Activated CD4-positive, alpha-beta T cell treated with anti-CD3 and anti-CD28 coated beads, Interleukin-2, amount 10 ng/mL, durations not matched to agents 24 days and 14 days (primary cell): ENCODE measurements at regions of chr13 and their contacts with region 1.

Region 1: DNA sequence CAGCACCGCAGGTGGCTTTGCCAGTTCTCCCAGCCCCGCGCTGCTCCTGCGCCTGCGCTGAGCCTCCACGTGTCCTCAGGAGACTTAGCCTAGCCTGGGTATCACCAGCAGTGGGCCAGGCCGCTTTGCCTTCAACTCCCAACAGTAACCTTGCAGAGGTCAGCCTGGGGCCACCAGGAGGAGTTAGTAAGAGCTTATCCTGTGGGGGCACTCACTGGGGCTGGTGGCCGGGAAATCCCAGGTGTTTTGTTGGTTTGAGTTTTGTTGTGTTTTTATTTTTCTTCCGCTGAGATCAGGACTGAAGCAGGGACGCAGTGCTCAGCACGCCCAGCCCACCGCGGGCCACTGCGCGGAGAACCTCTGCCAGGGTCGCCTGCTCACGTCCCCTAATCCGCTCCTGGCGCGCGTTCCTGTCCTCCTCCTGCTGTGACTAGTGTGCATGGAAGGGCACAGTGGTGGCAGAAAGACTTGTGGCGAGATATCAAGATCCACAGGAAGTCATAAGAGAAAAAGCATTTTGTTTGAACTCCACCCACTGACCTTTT is 207.4 kb upstream of the RFC3 start:
- DNase-seq: peak; percentile 79
- H3K4me3 Mint-ChIP-seq: peak overlapping the region; percentile 89
- H3K27ac Mint-ChIP-seq: peak overlapping the region; percentile 87
- H3K4me1 Mint-ChIP-seq: peaks cover 38% of the 10 kb centered on the region
- H3K27me3 Mint-ChIP-seq: no peaks in the 10 kb centered on the region

Region 2: DNA sequence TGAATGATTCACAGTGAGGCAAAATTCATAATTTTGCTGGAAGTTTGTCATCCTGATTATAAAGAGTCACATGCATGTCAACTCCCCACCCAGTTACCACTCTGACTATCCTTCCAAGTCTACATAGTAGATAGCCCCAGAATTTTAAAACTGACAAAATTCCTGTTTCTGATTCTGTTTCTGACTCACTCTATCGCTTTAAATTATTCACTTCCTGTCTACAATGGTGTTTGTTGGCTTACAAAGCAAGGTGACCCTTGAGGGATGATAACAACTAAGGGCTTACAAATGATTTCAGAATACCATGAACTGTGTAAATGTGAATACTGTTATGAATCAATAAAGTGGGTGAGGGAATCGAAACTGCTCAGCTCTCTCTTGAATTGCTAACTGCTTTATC is 693.0 kb before region 1 on chr13:
- intact Hi-C with region 1: loop called (anchors 5 kb)
- DNase-seq: no peak
- H3K4me3 Mint-ChIP-seq: no peak overlapping the region
- H3K27ac Mint-ChIP-seq: peak overlapping the region; percentile 57
- H3K4me1 Mint-ChIP-seq: peaks cover 10% of the 10 kb centered on the region
- H3K27me3 Mint-ChIP-seq: no peaks in the 10 kb centered on the region

Region 3: GRCh38 chr13:33146843-33147611 is 463.5 kb before region 1 on chr13:
- intact Hi-C with region 1: loop called (anchors 2 kb)
- DNase-seq: peak; percentile 75
- H3K4me3 Mint-ChIP-seq: peak overlapping the region; percentile 35
- H3K27ac Mint-ChIP-seq: peak overlapping the region; percentile 90
- H3K4me1 Mint-ChIP-seq: peaks cover 28% of the 10 kb centered on the region
- H3K27me3 Mint-ChIP-seq: no peaks in the 10 kb centered on the region

Region 4: GRCh38 chr13:33228648-33229445 is 381.7 kb before region 1 on chr13:
- intact Hi-C with region 1: loop called (anchors 5 kb)
- DNase-seq: peak; percentile 67
- H3K4me3 Mint-ChIP-seq: no peak overlapping the region
- H3K27ac Mint-ChIP-seq: peak overlapping the region; percentile 10
- H3K4me1 Mint-ChIP-seq: peaks cover 8% of the 10 kb centered on the region
- H3K27me3 Mint-ChIP-seq: peaks cover 3% of the 10 kb centered on the region

Region 5: GRCh38 chr13:33571618-33572017 is 38.9 kb before region 1 on chr13:
- intact Hi-C with region 1: loop called (anchors 5 kb)
- DNase-seq: no peak
- H3K4me3 Mint-ChIP-seq: no peak overlapping the region
- H3K27ac Mint-ChIP-seq: no peak overlapping the region
- H3K4me1 Mint-ChIP-seq: peaks cover 8% of the 10 kb centered on the region
- H3K27me3 Mint-ChIP-seq: no peaks in the 10 kb centered on the region

Region 6: GRCh38 chr13:33678906-33679657 is 68.5 kb after region 1 on chr13:
- intact Hi-C with region 1: loop called (anchors 1 kb)
- DNase-seq: peak; percentile 88
- H3K4me3 Mint-ChIP-seq: peak overlapping the region; percentile 43
- H3K27ac Mint-ChIP-seq: peak overlapping the region; percentile 92
- H3K4me1 Mint-ChIP-seq: peaks cover 26% of the 10 kb centered on the region
- H3K27me3 Mint-ChIP-seq: no peaks in the 10 kb centered on the region

Region 7: DNA sequence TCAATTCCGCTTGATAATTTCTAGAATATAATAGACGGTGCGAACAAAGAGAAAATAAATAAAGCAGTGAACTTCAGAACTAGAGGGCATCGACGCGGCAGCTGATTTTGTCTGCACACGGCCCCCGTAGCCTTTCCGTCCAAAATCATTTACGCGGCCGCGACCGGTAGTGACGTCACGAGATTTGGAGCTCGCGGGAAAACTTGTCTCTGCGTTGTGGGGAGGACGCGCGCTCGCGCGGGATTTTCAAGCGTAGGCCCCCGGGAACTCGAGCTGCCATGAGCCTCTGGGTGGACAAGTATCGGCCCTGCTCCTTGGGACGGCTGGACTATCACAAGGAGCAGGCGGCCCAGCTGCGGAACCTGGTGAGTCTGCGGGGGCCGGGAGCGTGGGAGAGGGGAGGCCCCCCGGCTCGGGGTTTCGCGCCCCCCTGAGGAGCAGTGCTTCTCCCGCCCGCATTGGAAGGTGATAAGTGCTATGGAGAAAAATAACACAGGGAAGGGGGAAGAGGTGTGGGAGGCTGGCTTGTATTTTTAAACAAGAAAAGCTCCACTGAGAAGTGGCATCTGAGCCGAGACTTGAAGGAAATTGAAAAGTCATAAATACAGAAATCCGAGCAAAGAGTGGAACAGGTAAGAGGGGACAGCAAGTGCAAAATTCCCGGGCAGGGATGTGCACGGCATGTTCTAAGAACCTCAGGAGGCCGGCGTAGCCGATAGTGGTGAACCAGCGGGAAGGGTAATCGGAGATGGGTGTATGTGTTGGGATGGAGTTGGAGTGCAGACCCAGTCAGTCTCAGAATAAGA is 207.6 kb after region 1 on chr13 and contains the start of gene RFC3:
- intact Hi-C with region 1: loop called (anchors 5 kb)
- DNase-seq: peak; percentile 98
- H3K4me3 Mint-ChIP-seq: peak within 1 kb of the TSS; percentile 93
- H3K27ac Mint-ChIP-seq: peak within 1 kb of the TSS; percentile 95
- H3K4me1 Mint-ChIP-seq: peaks cover 30% of the 10 kb centered on the region
- H3K27me3 Mint-ChIP-seq: no peaks in the 10 kb centered on the region
- total RNA-seq, gene RFC3: 77.8 and 81.0 TPM in 2 replicates